CD8-positive, alpha-beta T cell (primary cell): ENCODE measurements at regions of chr20 and their contacts with region 1.

Region 1: DNA sequence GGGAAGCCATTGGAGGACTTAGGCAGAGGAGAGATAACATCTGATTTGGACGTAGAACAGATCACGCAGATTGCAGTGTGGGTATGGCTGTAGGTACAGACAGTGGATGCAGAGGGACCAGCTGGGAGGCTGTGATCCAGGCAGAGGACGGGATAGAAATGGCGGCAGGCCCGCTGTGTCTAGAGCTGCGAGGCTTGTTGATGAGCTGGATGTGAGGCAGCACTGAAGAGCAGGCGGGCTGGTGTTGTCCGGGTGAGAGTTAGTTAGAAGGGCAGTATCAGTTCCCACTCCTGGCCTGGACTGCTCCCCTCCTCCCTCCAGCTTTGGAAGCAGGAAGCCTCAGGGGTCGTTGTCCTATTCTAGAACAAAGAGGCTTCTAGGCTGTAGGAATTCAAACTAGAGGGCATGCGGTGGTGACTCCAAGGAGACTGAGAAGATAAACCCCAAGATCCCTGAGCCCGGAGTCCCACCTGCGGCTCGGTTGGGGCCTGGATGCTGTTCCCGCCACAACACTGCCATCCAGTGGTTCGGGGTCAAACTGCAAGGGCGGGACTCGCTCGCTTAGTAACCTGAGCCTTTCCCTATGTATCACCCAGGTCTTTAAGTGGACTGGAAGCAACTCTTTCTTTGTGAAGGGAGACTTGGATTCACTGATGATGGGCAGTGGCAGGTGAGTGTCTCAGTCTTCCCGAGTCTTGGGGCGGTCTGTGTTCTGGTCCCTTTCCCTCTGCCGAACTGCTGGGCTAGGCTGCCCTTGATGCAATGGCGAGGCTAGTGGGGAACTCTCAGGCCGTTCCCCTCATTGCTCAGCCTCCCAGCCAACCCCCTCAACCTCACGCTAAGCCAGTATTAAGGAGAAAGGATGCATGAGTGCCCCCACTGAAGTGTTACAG is 11.2 kb downstream of the TLDC2 start:
- DNase-seq: peak; percentile 65 to 85 (median 80)
- ATAC-seq: peak; percentile 98
- H3K4me3 ChIP-seq: no peak overlapping the region
- H3K4me3 Mint-ChIP-seq: no peak overlapping the region
- H3K27ac ChIP-seq: peak overlapping the region in 1 of 2 experiments; percentile 50
- H3K27ac Mint-ChIP-seq: peak overlapping the region; percentile 79
- H3K4me1 ChIP-seq: peaks cover 4% of the 10 kb centered on the region
- H3K4me1 Mint-ChIP-seq: peaks cover 17% of the 10 kb centered on the region
- H3K27me3 ChIP-seq: no peaks in the 10 kb centered on the region
- H3K27me3 Mint-ChIP-seq: no peaks in the 10 kb centered on the region
- CTCF ChIP-seq: peak; percentile 87

Region 2: DNA sequence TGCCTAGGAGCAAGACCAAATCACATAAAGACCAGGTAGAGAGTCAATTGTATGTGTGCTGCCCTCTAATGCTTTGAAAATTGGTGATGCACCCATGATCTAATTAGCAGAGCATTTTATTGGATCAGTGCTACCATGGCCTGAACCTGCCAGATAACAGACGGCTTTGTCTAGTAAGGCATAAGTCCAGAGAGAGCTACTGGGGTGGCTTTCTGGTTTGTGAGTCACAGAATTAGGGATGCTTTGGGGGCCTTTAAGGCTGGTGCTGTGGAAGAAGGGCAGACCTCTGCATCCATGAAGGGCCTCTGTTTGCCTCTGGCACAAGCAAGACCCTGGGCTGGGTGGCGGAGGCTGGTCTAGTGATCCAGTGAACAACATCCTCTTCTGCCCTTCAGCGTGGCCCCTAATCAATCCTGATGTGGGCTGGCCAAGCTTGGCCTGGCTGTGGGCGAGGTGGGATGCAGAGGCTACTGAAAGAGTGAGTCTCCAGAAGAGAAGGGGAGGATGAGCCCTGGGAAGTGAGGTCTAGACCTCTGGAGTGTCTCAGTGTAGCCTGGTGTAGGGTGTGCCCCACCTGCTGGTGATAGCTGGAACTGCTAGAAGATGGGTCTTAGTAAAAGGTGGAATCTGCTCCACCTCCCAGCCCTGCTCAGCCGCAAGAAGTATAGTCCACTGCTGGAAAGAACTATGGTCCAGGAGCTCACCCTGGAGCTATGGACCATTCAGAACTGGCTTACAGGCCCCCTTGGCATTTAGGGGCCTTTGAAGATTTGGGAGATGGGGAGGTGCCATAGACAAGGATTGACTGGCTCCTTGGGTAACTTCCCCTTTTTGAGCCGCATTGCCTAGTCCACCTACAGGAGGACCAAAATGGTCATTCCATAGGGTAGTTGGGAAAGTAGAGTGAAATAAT is 687.5 kb before region 1 on chr20:
- CTCF ChIA-PET with region 1: interaction called, 5 read pairs
- POLR2A ChIA-PET with region 1: no interaction called
- intact Hi-C with region 1: loop called (anchors 5 kb)
- DNase-seq: peak; percentile 53 to 79 (median 74)
- ATAC-seq: peak; percentile 82
- H3K4me3 ChIP-seq: no peak overlapping the region
- H3K4me3 Mint-ChIP-seq: no peak overlapping the region
- H3K27ac ChIP-seq: no peak overlapping the region
- H3K27ac Mint-ChIP-seq: no peak overlapping the region
- H3K4me1 ChIP-seq: no peaks in the 10 kb centered on the region
- H3K4me1 Mint-ChIP-seq: peaks cover 8% of the 10 kb centered on the region
- H3K27me3 ChIP-seq: no peaks in the 10 kb centered on the region
- H3K27me3 Mint-ChIP-seq: peaks cover 7% of the 10 kb centered on the region
- CTCF ChIP-seq: peak; percentile 82

Region 3: DNA sequence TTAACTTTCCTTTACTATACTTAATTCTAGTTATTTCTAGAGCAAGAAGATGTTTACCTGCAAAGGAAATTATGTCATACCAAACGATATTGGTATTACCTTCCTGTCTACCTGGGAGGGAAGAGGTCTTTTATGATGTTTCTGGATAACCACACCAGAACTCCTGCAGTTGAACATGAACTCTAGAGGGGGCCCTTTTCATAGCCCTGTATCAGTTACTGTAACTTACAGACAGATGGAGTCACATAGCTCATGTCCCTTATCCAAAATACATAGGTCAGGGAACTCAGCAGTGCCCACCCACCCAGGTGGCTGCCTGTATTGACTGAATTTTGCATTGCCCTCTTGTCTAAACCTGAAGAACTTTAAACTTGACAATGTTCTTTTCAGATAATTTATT is 380.9 kb before region 1 on chr20:
- CTCF ChIA-PET with region 1: interaction called, 3 read pairs
- POLR2A ChIA-PET with region 1: no interaction called
- intact Hi-C with region 1: loop called in 1 of 2 experiments (anchors 10 kb)
- DNase-seq: peak in 2 of 9 experiments; percentile 36 to 59
- ATAC-seq: peak; percentile 80
- H3K4me3 ChIP-seq: no peak overlapping the region
- H3K4me3 Mint-ChIP-seq: no peak overlapping the region
- H3K27ac ChIP-seq: no peak overlapping the region
- H3K27ac Mint-ChIP-seq: no peak overlapping the region
- H3K4me1 ChIP-seq: no peaks in the 10 kb centered on the region
- H3K4me1 Mint-ChIP-seq: peaks cover 8% of the 10 kb centered on the region
- H3K27me3 ChIP-seq: no peaks in the 10 kb centered on the region
- H3K27me3 Mint-ChIP-seq: no peaks in the 10 kb centered on the region
- CTCF ChIP-seq: peak; percentile 51

Region 4: DNA sequence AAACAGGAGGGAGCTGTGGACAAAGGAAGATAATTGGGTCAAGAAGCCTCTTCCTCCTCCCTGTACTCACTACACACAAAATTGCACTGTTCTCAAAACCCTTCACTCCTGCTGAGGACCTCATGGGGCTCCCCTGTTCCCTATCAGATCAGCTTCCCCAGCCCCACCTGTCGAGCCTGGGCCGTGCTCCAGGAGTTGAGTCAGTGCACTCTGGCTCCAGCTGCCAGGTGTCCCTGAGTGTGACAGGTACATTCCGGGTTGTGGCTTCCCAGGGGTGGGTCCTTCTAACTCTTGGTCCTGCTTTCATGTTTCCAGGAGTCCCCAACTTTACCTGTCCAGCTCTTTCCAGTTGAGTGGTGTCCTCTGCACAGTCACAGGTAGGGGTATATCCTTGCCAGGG is 273.1 kb before region 1 on chr20:
- CTCF ChIA-PET with region 1: no interaction called
- POLR2A ChIA-PET with region 1: no interaction called
- intact Hi-C with region 1: loop called (anchors 1 to 5 kb)
- DNase-seq: no peak
- ATAC-seq: no peak
- H3K4me3 ChIP-seq: no peak overlapping the region
- H3K4me3 Mint-ChIP-seq: no peak overlapping the region
- H3K27ac ChIP-seq: no peak overlapping the region
- H3K27ac Mint-ChIP-seq: peak overlapping the region; percentile 55
- H3K4me1 ChIP-seq: no peaks in the 10 kb centered on the region
- H3K4me1 Mint-ChIP-seq: peaks cover 16% of the 10 kb centered on the region
- H3K27me3 ChIP-seq: no peaks in the 10 kb centered on the region
- H3K27me3 Mint-ChIP-seq: no peaks in the 10 kb centered on the region
- CTCF ChIP-seq: no peak

Region 5: GRCh38 chr20:36666181-36666740 is 220.8 kb before region 1 on chr20:
- CTCF ChIA-PET with region 1: no interaction called
- POLR2A ChIA-PET with region 1: no interaction called
- intact Hi-C with region 1: loop called (anchors 2 to 10 kb)
- DNase-seq: peak in 2 of 9 experiments; percentile 32 to 50
- ATAC-seq: peak; percentile 55
- H3K4me3 ChIP-seq: no peak overlapping the region
- H3K4me3 Mint-ChIP-seq: no peak overlapping the region
- H3K27ac ChIP-seq: no peak overlapping the region
- H3K27ac Mint-ChIP-seq: no peak overlapping the region
- H3K4me1 ChIP-seq: no peaks in the 10 kb centered on the region
- H3K4me1 Mint-ChIP-seq: peaks cover 1% of the 10 kb centered on the region
- H3K27me3 ChIP-seq: no peaks in the 10 kb centered on the region
- H3K27me3 Mint-ChIP-seq: no peaks in the 10 kb centered on the region
- CTCF ChIP-seq: no peak

Region 6: DNA sequence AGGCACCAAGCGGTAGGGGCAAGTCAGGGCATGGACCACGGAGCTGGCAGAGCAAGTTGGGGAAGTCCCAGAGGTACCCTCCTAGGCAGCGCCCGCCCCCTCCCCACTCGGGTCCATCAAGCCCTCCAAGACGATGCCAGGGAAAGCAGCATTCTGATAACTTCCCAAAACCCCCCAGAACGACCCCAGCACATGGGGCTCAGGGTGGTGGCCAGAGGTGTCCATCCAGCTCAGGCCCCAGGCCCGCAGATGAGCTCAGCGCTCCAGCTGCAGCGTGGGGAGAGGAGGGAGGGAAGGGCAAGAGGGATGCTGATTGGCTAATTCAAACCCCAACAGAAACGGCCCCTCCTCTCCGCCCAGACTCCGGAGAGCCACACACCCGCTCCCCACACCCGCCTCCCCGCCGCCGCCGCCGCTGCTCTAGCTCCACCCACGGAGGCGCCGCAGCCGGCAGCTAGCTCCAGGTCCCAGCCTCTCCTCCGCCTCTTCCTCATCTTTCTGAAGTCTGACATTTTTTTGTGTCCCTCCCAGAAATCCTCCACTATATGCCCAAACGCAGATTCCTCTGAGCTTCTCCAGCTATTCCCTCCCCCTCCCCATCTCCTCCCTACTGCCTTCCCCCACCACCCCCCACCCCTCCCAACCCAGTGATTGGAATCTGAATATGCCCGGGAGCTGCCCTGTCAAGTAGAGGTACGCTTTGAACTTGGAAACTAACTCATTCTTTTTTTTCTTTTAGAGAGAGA is 51.5 kb before region 1 on chr20:
- CTCF ChIA-PET with region 1: no interaction called
- POLR2A ChIA-PET with region 1: interaction called, 4 read pairs
- intact Hi-C with region 1: loop called (anchors 2 to 10 kb)
- DNase-seq: peak; percentile 61 to 88 (median 77)
- ATAC-seq: peak; percentile 99
- H3K4me3 ChIP-seq: peak overlapping the region; percentile 50 to 63
- H3K4me3 Mint-ChIP-seq: peak overlapping the region; percentile 73
- H3K27ac ChIP-seq: no peak overlapping the region
- H3K27ac Mint-ChIP-seq: no peak overlapping the region
- H3K4me1 ChIP-seq: peaks cover 6% of the 10 kb centered on the region
- H3K4me1 Mint-ChIP-seq: peaks cover 9% of the 10 kb centered on the region
- H3K27me3 ChIP-seq: no peaks in the 10 kb centered on the region
- H3K27me3 Mint-ChIP-seq: no peaks in the 10 kb centered on the region
- CTCF ChIP-seq: no peak

Region 7: GRCh38 chr20:36875702-36876472 is 11.2 kb before region 1 on chr20 and contains the start of gene TLDC2:
- CTCF ChIA-PET with region 1: interaction called, 11 read pairs
- POLR2A ChIA-PET with region 1: no interaction called
- intact Hi-C with region 1: no loop called
- DNase-seq: no peak
- ATAC-seq: no peak
- H3K4me3 ChIP-seq: no peak within 1 kb of the TSS
- H3K4me3 Mint-ChIP-seq: no peak within 1 kb of the TSS
- H3K27ac ChIP-seq: no peak within 1 kb of the TSS
- H3K27ac Mint-ChIP-seq: no peak within 1 kb of the TSS
- H3K4me1 ChIP-seq: no peaks in the 10 kb centered on the region
- H3K4me1 Mint-ChIP-seq: no peaks in the 10 kb centered on the region
- H3K27me3 ChIP-seq: no peaks in the 10 kb centered on the region
- H3K27me3 Mint-ChIP-seq: no peaks in the 10 kb centered on the region
- CTCF ChIP-seq: no peak
- total RNA-seq, gene TLDC2: not detected